PC-9 (cell line): ENCODE measurements at regions of chr1 and their contacts with region 1.

Region 1: DNA sequence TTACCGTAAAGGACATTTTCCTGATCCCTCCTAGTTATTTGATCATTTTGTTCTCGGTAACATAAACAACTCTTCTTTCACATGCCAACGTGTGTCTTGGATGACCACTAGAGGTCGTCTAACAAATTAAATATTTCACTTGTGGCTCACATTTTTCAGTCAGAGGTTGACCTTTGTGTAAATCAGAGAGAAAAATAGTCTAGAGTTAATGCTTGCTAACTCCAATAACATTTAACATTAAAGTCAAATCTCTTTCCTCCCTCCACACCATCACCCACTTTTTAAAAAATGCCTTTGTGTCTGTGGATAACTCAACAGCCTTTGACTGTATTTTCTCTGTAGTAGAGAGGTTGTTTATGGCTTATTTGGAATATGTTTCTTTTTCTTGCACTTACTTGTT is 220.5 kb upstream of the B3GALT2 start:
- DNase-seq: no peak
- H3K4me3 ChIP-seq: no peak overlapping the region
- H3K27ac ChIP-seq: no peak overlapping the region
- H3K4me1 ChIP-seq: no peaks in the 10 kb centered on the region
- H3K27me3 ChIP-seq: no peaks in the 10 kb centered on the region
- CTCF ChIP-seq: peak; percentile 72

Region 2: GRCh38 chr1:193602705-193603104 is 195.8 kb after region 1 on chr1:
- CTCF ChIA-PET with region 1: no interaction called
- POLR2A ChIA-PET with region 1: no interaction called
- intact Hi-C with region 1: no loop called
- DNase-seq: no peak
- H3K4me3 ChIP-seq: no peak overlapping the region
- H3K27ac ChIP-seq: no peak overlapping the region
- H3K4me1 ChIP-seq: no peaks in the 10 kb centered on the region
- H3K27me3 ChIP-seq: no peaks in the 10 kb centered on the region
- CTCF ChIP-seq: no peak

Region 3: DNA sequence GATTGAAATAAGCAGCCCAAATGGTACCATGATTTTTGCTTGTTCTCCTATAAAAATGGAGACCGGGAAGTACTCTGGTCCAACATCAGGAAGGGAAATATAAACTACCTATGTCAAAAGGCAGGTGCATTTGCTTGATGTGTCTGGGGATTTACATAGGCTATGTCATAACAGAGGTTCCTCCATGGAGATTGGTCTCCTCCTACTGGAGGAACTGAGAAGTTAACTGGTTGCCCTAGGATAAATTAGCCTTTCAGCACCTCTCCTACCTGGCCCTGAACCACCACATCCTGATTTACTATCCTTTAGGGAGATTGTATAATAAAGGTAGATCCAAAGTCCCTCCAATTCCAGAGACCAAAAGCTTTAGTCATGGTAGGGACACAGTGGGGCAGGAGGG is 888.8 kb after region 1 on chr1:
- CTCF ChIA-PET with region 1: no interaction called
- POLR2A ChIA-PET with region 1: no interaction called
- intact Hi-C with region 1: loop called (anchors 5 kb)
- DNase-seq: peak in 1 of 2 experiments; percentile 3
- H3K4me3 ChIP-seq: no peak overlapping the region
- H3K27ac ChIP-seq: no peak overlapping the region
- H3K4me1 ChIP-seq: no peaks in the 10 kb centered on the region
- H3K27me3 ChIP-seq: no peaks in the 10 kb centered on the region
- CTCF ChIP-seq: peak; percentile 55